Right cardiac atrium (tissue), 5 donors: ENCODE measurements at regions of chr5 and their contacts with region 1.

Region 1: DNA sequence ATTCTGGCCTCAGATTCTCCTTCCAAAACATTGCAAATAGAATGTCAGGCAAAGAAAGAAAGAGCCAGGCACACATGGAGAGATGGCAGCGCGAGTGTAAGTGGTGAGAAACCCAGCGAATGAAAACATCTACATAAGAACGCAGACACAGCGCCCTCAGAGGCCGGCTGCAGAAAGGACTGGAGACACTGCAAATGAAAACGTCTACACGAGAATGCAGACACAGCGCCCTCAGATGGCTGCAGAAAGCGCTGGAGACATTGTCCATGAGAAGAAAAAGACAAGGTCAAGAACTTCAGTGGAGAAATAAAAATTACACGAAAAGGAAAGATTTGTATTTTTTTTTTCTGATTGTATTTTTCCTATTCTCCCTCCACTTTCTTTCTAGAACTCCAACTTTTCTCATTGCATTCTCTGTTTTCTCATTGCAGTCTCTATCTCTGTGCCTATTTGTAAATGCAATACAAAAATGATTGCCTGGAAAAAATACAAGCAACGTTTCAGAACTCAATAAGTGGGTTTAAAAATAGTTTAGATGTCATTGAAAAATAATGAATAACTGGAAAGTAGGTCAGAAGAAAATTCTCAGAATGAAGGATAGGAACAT is 117.9 kb upstream of the LPCAT1 start:
- DNase-seq: peak; percentile 80 to 92 (median 85)
- ATAC-seq: peak; percentile 58 to 62
- H3K4me3 ChIP-seq: no peak overlapping the region
- H3K27ac ChIP-seq: no peak overlapping the region
- H3K4me1 ChIP-seq: no peaks in the 10 kb centered on the region
- H3K27me3 ChIP-seq: peaks cover 2% of the 10 kb centered on the region

Region 2: GRCh38 chr5:1167728-1168709 is 473.6 kb before region 1 on chr5:
- intact Hi-C with region 1: loop called in 1 of 4 experiments (anchors 5 kb)
- DNase-seq: peak; percentile 70 to 86 (median 76)
- ATAC-seq: peak; percentile 66 to 78
- H3K4me3 ChIP-seq: no peak overlapping the region
- H3K27ac ChIP-seq: no peak overlapping the region
- H3K4me1 ChIP-seq: no peaks in the 10 kb centered on the region
- H3K27me3 ChIP-seq: no peaks in the 10 kb centered on the region

Region 3: GRCh38 chr5:1374680-1375055 is 267.0 kb before region 1 on chr5:
- intact Hi-C with region 1: loop called in 1 of 4 experiments (anchors 10 kb)
- DNase-seq: peak in 1 of 3 donors; percentile 42
- ATAC-seq: no peak
- H3K4me3 ChIP-seq: no peak overlapping the region
- H3K27ac ChIP-seq: no peak overlapping the region
- H3K4me1 ChIP-seq: no peaks in the 10 kb centered on the region
- H3K27me3 ChIP-seq: no peaks in the 10 kb centered on the region

Region 4: GRCh38 chr5:1385395-1386273 is 256.0 kb before region 1 on chr5:
- intact Hi-C with region 1: loop called in 1 of 4 experiments (anchors 10 kb)
- DNase-seq: peak; percentile 86 to 94 (median 94)
- ATAC-seq: peak; percentile 96 to 97
- H3K4me3 ChIP-seq: peak overlapping the region; percentile 55
- H3K27ac ChIP-seq: no peak overlapping the region
- H3K4me1 ChIP-seq: peaks cover 2% of the 10 kb centered on the region
- H3K27me3 ChIP-seq: no peaks in the 10 kb centered on the region

Region 5: GRCh38 chr5:1479581-1480188 is 162.0 kb before region 1 on chr5:
- intact Hi-C with region 1: loop called in 1 of 4 experiments (anchors 5 kb)
- DNase-seq: peak; percentile 53 to 82 (median 80)
- ATAC-seq: peak; percentile 27 to 58
- H3K4me3 ChIP-seq: no peak overlapping the region
- H3K27ac ChIP-seq: no peak overlapping the region
- H3K4me1 ChIP-seq: no peaks in the 10 kb centered on the region
- H3K27me3 ChIP-seq: no peaks in the 10 kb centered on the region